IMR-90 (cell line): ENCODE measurements at regions of chr6 and their contacts with region 1.

Region 1: DNA sequence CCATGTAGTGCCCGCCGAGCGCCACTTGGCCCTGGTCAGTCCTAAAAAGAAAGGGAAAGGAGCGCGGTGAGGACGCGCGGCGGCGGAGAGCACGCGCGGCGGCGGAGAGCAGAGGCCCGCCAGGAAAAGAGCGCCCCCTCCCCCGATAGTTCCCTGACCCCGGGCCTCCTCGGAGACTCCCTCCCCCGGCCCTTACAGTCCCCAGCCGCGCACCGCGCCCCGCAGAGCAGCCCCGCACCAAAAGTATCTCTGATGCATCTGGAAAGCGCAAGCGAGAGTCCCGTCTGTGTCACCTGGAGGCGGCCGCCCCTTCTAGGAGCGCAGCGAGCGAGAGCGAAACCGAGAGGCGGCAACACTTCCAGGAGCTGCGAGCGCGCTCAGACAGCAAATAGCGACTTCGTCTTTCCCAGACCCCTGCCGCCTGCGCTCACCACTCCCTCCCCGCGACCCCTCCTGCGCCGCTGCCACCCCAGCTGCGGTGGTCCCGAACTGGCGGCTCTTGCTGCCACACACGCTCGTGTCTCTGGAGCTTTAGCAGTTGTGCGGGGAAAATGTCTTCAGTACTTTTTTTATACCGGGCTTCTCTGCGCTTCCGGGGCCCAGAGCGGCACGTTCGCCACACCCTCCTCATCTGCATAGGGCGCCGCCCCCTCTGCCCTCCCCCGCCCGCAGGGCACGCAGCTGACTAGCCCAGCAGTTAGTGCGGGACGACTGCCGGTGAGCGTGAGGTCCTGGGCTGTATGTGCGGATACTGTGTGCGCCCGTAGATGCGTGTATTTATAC is at the start of gene TENT5A:
- DNase-seq: peak; percentile 88
- ATAC-seq: peak; percentile 77
- H3K4me3 ChIP-seq: peak within 1 kb of the TSS; percentile 92
- H3K27ac ChIP-seq: peak within 1 kb of the TSS; percentile 94
- H3K4me1 ChIP-seq: peaks cover 7% of the 10 kb centered on the region
- H3K27me3 ChIP-seq: no peaks in the 10 kb centered on the region
- CTCF ChIP-seq: no peak; the same call in 1 of the 2 replicates
- POLR2A ChIP-seq: no peak; the same call in 1 of the 2 replicates
- RAD21 ChIP-seq: no peak; the same call in 1 of the 2 replicates
- total RNA-seq, gene TENT5A: 10.8 and 16.9 TPM in 2 replicates

Region 2: GRCh38 chr6:80214436-80215022 is 1537.8 kb before region 1 on chr6:
- CTCF ChIA-PET with region 1: no interaction called
- POLR2A ChIA-PET with region 1: no interaction called
- dilution Hi-C with region 1: no loop called
- in situ Hi-C with region 1: loop called (anchors 10 kb)
- intact Hi-C with region 1: loop called (anchors 2 kb)
- DNase-seq: peak; percentile 70
- ATAC-seq: peak; percentile 97
- H3K4me3 ChIP-seq: no peak overlapping the region
- H3K27ac ChIP-seq: no peak overlapping the region
- H3K4me1 ChIP-seq: peaks cover 2% of the 10 kb centered on the region; the same call in 1 of the 2 replicates
- H3K27me3 ChIP-seq: no peaks in the 10 kb centered on the region
- CTCF ChIP-seq: peak; percentile 87
- POLR2A ChIP-seq: no peak
- RAD21 ChIP-seq: peak; percentile 90

Region 3: GRCh38 chr6:80605165-80605989 is 1147.0 kb before region 1 on chr6:
- CTCF ChIA-PET with region 1: no interaction called
- POLR2A ChIA-PET with region 1: no interaction called
- dilution Hi-C with region 1: no loop called
- in situ Hi-C with region 1: loop called (anchors 10 kb)
- intact Hi-C with region 1: loop called (anchors 1 kb)
- DNase-seq: peak; percentile 68
- ATAC-seq: peak; percentile 71
- H3K4me3 ChIP-seq: no peak overlapping the region
- H3K27ac ChIP-seq: no peak overlapping the region
- H3K4me1 ChIP-seq: peaks cover 3% of the 10 kb centered on the region; the same call in 1 of the 2 replicates
- H3K27me3 ChIP-seq: no peaks in the 10 kb centered on the region
- CTCF ChIP-seq: peak; percentile 56
- POLR2A ChIP-seq: no peak
- RAD21 ChIP-seq: peak; percentile 64

Region 4: DNA sequence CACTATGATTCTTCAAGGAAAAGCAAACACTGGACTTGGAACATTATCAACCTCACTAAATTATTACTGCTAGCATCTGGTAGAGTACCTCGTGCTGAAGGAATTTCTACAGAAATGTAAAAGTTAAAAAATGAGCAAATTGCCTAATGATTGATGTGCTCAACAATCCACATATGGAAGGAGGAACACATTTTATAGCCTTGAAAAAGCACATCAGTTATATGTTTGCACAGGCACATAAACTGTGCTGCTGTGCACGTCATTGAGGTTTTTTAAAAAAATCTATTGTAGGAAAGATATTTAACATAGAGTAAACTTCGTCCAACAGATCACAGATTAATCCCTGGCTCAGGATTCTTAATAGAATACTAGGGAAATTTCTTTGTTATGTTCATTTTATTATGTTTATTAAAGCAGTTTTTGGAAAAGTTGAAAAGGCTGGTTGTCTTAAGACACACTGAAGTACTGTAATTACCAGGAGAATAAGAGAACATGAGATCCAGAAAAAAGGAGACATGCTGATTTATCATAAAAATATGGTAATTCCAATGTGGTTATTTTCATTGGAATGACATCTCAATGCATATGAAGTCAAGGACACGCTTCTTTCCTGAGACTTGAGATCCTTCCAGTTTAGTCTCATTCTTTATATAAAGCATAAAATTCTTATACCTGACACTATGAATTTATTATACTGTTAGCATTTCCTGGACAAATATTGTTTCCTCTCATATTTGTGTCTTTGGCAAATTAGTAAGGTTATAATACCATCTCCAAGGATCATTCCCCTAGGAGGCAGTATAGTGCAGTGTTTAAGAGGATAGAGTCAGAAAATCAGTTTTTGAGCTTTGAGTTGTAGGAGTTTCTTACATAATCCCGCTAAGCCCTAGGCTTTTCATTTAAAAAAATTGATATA is 510.9 kb before region 1 on chr6:
- CTCF ChIA-PET with region 1: no interaction called
- POLR2A ChIA-PET with region 1: no interaction called
- dilution Hi-C with region 1: no loop called
- in situ Hi-C with region 1: no loop called
- intact Hi-C with region 1: loop called (anchors 1 kb)
- DNase-seq: peak; percentile 49
- ATAC-seq: peak; percentile 60
- H3K4me3 ChIP-seq: no peak overlapping the region
- H3K27ac ChIP-seq: no peak overlapping the region
- H3K4me1 ChIP-seq: no peaks in the 10 kb centered on the region
- H3K27me3 ChIP-seq: no peaks in the 10 kb centered on the region
- CTCF ChIP-seq: peak; percentile 54
- POLR2A ChIP-seq: no peak
- RAD21 ChIP-seq: peak; percentile 62

Region 5: DNA sequence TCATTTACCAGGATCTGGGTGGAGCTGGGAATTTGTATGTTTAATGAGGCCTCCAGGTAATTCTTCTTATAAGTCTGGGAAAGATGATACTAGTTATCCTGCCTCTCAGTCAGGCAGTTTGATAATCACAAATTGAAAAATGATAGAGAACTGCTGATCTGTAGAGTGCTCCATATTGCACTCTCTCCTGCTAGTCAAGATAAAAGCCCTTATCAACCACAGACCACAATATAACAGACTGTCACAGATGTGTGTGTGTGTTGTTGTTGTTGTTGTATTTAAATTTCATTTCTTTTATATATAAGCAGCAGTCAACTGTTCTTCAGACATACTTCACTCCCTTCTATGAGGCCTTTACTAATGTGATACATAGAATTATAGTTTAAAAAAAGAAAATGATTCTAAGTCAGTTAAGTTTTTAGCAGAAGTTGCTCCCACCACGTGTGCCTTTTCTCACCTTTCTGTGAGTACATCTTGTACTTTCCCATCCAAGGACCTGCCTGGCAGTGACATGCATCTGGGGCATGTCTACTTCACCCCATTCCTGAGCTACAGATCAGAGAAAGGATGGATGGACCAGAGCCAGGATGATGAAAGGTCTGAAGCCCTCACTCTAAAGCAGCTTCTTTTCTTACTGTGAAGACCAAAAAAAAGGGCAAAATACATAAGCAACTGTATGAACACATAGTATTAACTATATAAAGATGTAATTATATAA is 29.7 kb before region 1 on chr6:
- CTCF ChIA-PET with region 1: no interaction called
- POLR2A ChIA-PET with region 1: no interaction called
- dilution Hi-C with region 1: no loop called
- in situ Hi-C with region 1: no loop called
- intact Hi-C with region 1: no loop called
- DNase-seq: no peak
- ATAC-seq: no peak
- H3K4me3 ChIP-seq: no peak overlapping the region
- H3K27ac ChIP-seq: no peak overlapping the region
- H3K4me1 ChIP-seq: no peaks in the 10 kb centered on the region
- H3K27me3 ChIP-seq: no peaks in the 10 kb centered on the region
- CTCF ChIP-seq: no peak
- POLR2A ChIP-seq: no peak
- RAD21 ChIP-seq: no peak

Region 6: DNA sequence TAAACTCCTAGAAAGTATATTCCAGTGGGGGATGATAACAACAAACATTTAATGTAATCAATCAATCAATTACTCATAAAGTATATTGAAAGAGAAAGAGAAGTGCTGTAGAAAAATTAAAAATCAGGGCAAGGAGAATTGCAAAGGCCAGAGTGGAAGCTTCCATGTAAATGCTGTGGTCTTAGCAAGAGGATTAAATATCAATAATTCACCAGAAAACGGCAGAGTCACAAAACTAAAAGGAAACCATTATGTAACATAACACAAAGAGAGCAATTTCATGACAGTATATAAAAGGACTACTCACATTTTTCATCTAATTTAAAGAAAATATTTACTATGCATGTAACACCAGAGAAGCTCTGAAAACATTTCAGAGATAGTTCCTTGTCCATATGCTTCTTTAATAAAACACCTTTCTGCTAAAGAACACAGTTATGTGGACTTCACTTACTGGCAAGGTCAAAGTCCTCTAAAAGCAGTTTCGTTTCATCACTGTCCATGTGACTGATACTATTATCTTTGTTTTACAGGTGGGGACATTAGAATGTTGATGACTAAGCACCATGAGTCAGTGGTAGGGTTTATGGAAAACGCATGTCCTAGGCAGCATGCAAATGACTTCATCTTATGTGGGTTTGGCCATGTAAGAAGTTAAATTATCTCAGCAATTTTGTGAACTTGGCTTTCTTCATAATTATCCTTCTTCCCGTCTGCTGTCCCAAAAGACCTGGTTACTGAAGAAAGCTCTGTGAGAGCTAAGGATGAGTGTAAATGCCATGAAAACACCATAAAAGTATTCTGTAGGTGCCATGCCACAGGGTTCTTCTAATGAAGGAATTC is 185.9 kb after region 1 on chr6:
- CTCF ChIA-PET with region 1: no interaction called
- POLR2A ChIA-PET with region 1: no interaction called
- dilution Hi-C with region 1: no loop called
- in situ Hi-C with region 1: no loop called
- intact Hi-C with region 1: loop called (anchors 5 kb)
- DNase-seq: peak; percentile 96
- ATAC-seq: peak; percentile 19
- H3K4me3 ChIP-seq: no peak overlapping the region
- H3K27ac ChIP-seq: no peak overlapping the region
- H3K4me1 ChIP-seq: peaks cover 16% of the 10 kb centered on the region
- H3K27me3 ChIP-seq: no peaks in the 10 kb centered on the region
- CTCF ChIP-seq: no peak
- POLR2A ChIP-seq: no peak
- RAD21 ChIP-seq: no peak

Region 7: GRCh38 chr6:82040405-82041221 is 288.3 kb after region 1 on chr6:
- CTCF ChIA-PET with region 1: no interaction called
- POLR2A ChIA-PET with region 1: no interaction called
- dilution Hi-C with region 1: no loop called
- in situ Hi-C with region 1: no loop called
- intact Hi-C with region 1: loop called (anchors 2 kb)
- DNase-seq: peak; percentile 59
- ATAC-seq: peak; percentile 99
- H3K4me3 ChIP-seq: no peak overlapping the region
- H3K27ac ChIP-seq: no peak overlapping the region
- H3K4me1 ChIP-seq: no peaks in the 10 kb centered on the region
- H3K27me3 ChIP-seq: no peaks in the 10 kb centered on the region
- CTCF ChIP-seq: peak; percentile 80
- POLR2A ChIP-seq: 0 out of 2 replicates have a peak, but pooled peaks have one; percentile 24
- RAD21 ChIP-seq: peak; percentile 80